ENCODE measurements at regions of chr14 and their contacts with region 1.

Region 1: GRCh38 chr14:23120541-23121251 is 1.6 kb upstream of the CEBPE start:
- DNase-seq: peak; percentile 94
- H3K4me3 Mint-ChIP-seq: peak overlapping the region; percentile 16
- H3K27ac Mint-ChIP-seq: peak overlapping the region; percentile 81
- H3K4me1 Mint-ChIP-seq: peaks cover 28% of the 10 kb centered on the region
- H3K27me3 Mint-ChIP-seq: peaks cover 4% of the 10 kb centered on the region

Region 2: DNA sequence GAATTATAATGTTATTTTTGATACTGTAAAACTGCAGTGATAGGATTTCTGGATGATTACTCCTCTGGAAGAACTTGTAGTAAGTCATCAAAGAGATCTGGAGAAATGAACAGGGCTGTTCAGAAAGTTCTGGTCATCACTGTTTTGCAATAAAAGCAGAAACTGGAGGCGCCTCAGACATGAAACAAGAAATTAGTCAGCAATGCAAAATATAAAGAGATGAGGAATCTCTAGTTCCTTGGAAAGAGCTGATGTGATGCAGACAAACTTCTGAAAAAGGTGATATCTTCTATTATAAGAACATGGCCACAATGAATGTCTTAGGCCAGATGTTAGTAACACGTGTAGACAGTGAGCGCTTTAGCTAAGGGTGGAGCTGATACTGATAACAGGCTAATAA is 35.2 kb before region 1 on chr14:
- intact Hi-C with region 1: no loop called
- DNase-seq: no peak
- H3K4me3 Mint-ChIP-seq: peak overlapping the region; percentile 9
- H3K27ac Mint-ChIP-seq: peak overlapping the region; percentile 74
- H3K4me1 Mint-ChIP-seq: peaks cover 13% of the 10 kb centered on the region
- H3K27me3 Mint-ChIP-seq: no peaks in the 10 kb centered on the region

Region 3: GRCh38 chr14:23154964-23155587 is 34.4 kb after region 1 on chr14:
- intact Hi-C with region 1: no loop called
- DNase-seq: no peak
- H3K4me3 Mint-ChIP-seq: no peak overlapping the region
- H3K27ac Mint-ChIP-seq: no peak overlapping the region
- H3K4me1 Mint-ChIP-seq: peaks cover 9% of the 10 kb centered on the region
- H3K27me3 Mint-ChIP-seq: peaks cover 5% of the 10 kb centered on the region

Region 4: DNA sequence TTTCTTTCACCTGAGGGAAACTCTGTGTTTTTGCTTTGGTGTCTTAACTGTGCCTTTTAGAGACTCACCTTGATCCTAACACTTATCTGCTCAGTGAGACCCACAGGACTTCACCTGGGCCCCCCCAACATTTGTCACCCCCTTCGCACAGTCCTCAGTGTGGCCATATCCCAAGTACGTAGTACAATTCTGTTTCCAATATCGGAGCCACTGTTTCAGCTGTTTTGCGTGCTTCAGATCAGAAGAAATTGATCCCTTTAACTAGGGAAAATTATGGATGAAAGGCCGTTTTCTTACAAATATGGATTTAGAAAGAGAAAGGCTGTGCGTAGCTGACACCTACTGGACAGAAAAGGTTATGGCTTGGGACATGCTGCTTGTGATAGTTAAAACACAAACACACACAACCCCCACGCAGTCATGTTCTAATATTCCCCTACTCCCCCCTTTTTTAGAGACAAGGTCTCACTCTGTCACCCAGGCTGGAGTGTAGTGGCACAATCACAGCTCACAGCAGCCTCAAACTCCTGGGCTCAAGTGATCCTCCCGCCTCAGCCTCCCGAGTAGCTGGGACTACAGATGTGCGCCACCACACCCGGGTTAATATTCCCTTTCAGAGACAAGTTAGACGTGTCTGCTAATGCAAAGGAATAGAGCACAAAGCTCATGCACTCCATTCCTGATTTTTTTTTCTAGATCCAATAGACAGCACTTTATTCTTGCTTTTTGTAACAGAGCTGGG is 66.4 kb after region 1 on chr14:
- intact Hi-C with region 1: loop called (anchors 1 kb)
- DNase-seq: peak; percentile 70
- H3K4me3 Mint-ChIP-seq: no peak overlapping the region
- H3K27ac Mint-ChIP-seq: no peak overlapping the region
- H3K4me1 Mint-ChIP-seq: no peaks in the 10 kb centered on the region
- H3K27me3 Mint-ChIP-seq: peaks cover 25% of the 10 kb centered on the region

Region 5: GRCh38 chr14:23379366-23380196 is 258.9 kb after region 1 on chr14:
- intact Hi-C with region 1: loop called (anchors 1 kb)
- DNase-seq: peak; percentile 90
- H3K4me3 Mint-ChIP-seq: no peak overlapping the region
- H3K27ac Mint-ChIP-seq: no peak overlapping the region
- H3K4me1 Mint-ChIP-seq: no peaks in the 10 kb centered on the region
- H3K27me3 Mint-ChIP-seq: peaks cover 10% of the 10 kb centered on the region